ENCODE measurements at regions of chr1 and their contacts with region 1.

Region 1: DNA sequence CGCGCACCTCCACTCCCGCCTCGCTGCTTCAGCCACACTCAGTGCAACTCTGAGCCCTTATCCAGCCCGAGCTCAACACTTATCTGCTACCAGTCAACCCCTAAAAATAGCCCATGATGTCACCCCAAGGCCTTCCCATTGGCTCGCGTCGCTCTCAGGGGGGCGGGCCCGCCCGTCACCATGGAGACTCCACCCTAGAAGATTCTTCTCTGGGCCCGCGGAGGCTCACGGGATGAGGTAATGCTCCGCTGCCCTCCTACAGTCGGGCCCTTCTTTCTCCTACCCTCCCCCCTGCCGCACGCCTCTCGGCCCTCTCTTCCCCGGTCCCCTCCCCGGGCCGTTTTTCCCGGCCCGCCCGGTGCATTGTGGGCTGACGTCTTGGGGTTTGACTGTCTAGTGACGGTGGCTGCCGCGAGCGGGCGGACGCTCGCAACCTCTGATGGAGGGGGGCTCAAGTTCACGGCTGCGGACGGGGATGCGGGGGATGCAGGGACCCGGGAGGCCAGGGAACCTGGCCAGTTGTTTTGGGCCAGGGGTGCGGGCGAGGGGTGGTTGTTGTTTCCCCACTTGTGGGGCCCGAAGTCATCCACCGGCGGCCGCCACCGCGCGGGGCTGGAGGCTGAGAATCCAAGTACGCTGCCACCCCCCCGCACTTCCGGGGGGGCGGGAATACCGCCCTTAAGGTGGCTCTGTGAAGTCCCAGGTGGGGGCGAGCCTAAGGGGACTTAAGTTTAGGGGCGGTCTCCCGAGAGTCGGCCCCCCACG is at the start of gene JUN:
- DNase-seq: peak; percentile 98 to 100 (median 99)
- H3K4me3 ChIP-seq: peak within 1 kb of the TSS; percentile 76 to 96
- H3K4me3 Mint-ChIP-seq: peak within 1 kb of the TSS; percentile 87 to 98 (median 92)
- H3K27ac ChIP-seq: peak within 1 kb of the TSS; percentile 99
- H3K27ac Mint-ChIP-seq: peak within 1 kb of the TSS; percentile 97 to 100 (median 99)
- H3K4me1 ChIP-seq: peaks cover 31% of the 10 kb centered on the region
- H3K4me1 Mint-ChIP-seq: peaks cover 19 to 49% (median 29%) of the 10 kb centered on the region in 4 donors
- H3K27me3 ChIP-seq: no peaks in the 10 kb centered on the region
- H3K27me3 Mint-ChIP-seq: peaks cover 3 to 5% of the 10 kb centered on the region in 2 donors
- total RNA-seq, gene JUN: 19.0 TPM

Region 2: GRCh38 chr1:58739856-58740466 is 44.2 kb before region 1 on chr1:
- CTCF ChIA-PET with region 1: interaction called, 4 read pairs
- POLR2A ChIA-PET with region 1: interaction called, 6 read pairs
- intact Hi-C with region 1: loop called (anchors 5 kb)
- DNase-seq: peak; percentile 39 to 69 (median 58)
- H3K4me3 ChIP-seq: no peak overlapping the region
- H3K4me3 Mint-ChIP-seq: no peak overlapping the region
- H3K27ac ChIP-seq: no peak overlapping the region
- H3K27ac Mint-ChIP-seq: no peak overlapping the region
- H3K4me1 ChIP-seq: no peaks in the 10 kb centered on the region
- H3K4me1 Mint-ChIP-seq: peaks cover 0 to 5% (median 3%) of the 10 kb centered on the region in 4 donors
- H3K27me3 ChIP-seq: no peaks in the 10 kb centered on the region
- H3K27me3 Mint-ChIP-seq: no peaks in the 10 kb centered on the region

Region 3: GRCh38 chr1:58827298-58827697 is 43.1 kb after region 1 on chr1:
- CTCF ChIA-PET with region 1: no interaction called
- POLR2A ChIA-PET with region 1: interaction called, 13 read pairs
- intact Hi-C with region 1: no loop called
- DNase-seq: no peak
- H3K4me3 ChIP-seq: no peak overlapping the region
- H3K4me3 Mint-ChIP-seq: no peak overlapping the region
- H3K27ac ChIP-seq: no peak overlapping the region
- H3K27ac Mint-ChIP-seq: no peak overlapping the region
- H3K4me1 ChIP-seq: no peaks in the 10 kb centered on the region
- H3K4me1 Mint-ChIP-seq: no peaks in the 10 kb centered on the region
- H3K27me3 ChIP-seq: no peaks in the 10 kb centered on the region
- H3K27me3 Mint-ChIP-seq: peaks cover 0 to 2% of the 10 kb centered on the region in 2 donors

Region 4: DNA sequence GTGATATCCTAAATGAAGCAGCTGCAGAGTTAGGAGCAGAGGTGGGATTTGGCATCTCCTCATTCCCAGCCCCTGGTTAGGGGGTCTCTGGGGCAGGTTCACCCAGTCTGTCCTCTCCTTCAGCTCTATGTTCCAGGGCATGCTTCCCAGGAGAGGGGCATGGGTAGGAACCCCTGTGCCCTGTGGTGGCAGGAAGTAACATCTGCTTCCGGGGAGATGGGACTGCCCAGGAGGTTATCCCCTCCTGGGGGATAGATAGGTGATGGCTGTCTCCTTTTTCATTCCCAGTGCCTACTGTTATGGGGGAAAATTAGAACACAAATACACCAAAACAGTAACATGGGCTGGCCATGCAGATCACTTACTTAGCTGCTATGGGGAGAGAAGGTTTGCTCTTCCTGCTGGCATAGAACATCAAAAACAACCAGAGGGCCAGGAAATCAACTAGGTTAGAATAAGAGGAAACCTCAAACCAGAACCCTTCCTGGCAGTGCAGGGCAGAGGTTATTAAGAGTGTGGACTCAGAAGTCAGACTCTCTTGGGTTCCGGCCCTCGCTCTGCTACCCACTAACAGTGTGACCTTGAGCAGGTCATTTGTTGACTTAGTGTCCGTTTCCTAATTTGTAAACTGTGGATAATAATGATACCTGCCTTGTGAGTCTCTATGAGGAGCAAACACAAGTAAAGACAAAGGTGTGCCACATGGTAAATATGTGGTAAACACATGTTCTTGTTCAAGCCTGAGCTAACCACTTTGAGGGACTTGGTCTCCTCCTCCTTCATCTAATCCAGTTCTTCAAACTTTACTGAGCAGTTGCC is 157.5 kb after region 1 on chr1:
- CTCF ChIA-PET with region 1: no interaction called
- POLR2A ChIA-PET with region 1: interaction called, 72 read pairs
- intact Hi-C with region 1: loop called (anchors 1 kb)
- DNase-seq: peak; percentile 62 to 79 (median 76)
- H3K4me3 ChIP-seq: peak overlapping the region in 1 of 2 donors; percentile 21
- H3K4me3 Mint-ChIP-seq: peak overlapping the region; percentile 56 to 86 (median 78)
- H3K27ac ChIP-seq: no peak overlapping the region
- H3K27ac Mint-ChIP-seq: peak overlapping the region; percentile 64 to 88 (median 73)
- H3K4me1 ChIP-seq: peaks cover 59% of the 10 kb centered on the region
- H3K4me1 Mint-ChIP-seq: peaks cover 58 to 69% (median 63%) of the 10 kb centered on the region in 4 donors
- H3K27me3 ChIP-seq: no peaks in the 10 kb centered on the region
- H3K27me3 Mint-ChIP-seq: peaks cover 0 to 5% of the 10 kb centered on the region in 2 donors

Region 5: DNA sequence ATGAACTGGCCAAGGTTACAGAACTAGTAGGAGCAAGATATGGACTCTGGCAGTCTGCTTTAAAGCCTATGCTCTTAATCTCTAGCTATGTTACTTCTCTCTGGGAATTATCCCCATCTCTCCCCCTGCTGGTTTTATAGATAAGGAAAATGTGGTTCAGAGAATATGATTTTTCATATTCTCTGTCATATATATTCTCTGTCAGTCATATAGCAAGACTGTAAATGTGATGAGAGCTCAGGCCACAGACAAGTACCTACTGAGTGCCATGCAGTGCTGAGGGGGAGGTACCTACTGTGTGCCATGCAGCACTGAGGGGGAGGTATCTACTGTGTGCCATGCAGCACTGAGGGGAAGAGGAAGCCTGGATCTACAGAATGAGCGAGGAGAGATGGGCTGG is 292.4 kb after region 1 on chr1:
- CTCF ChIA-PET with region 1: interaction called, 9 read pairs
- POLR2A ChIA-PET with region 1: interaction called, 23 read pairs
- intact Hi-C with region 1: loop called (anchors 1 kb)
- DNase-seq: no peak
- H3K4me3 ChIP-seq: no peak overlapping the region
- H3K4me3 Mint-ChIP-seq: no peak overlapping the region
- H3K27ac ChIP-seq: no peak overlapping the region
- H3K27ac Mint-ChIP-seq: peak overlapping the region in 1 of 7 donors; percentile 43
- H3K4me1 ChIP-seq: peaks cover 12% of the 10 kb centered on the region
- H3K4me1 Mint-ChIP-seq: peaks cover 8 to 16% (median 12%) of the 10 kb centered on the region in 4 donors
- H3K27me3 ChIP-seq: no peaks in the 10 kb centered on the region
- H3K27me3 Mint-ChIP-seq: peaks cover 0 to 5% of the 10 kb centered on the region in 2 donors

Region 6: DNA sequence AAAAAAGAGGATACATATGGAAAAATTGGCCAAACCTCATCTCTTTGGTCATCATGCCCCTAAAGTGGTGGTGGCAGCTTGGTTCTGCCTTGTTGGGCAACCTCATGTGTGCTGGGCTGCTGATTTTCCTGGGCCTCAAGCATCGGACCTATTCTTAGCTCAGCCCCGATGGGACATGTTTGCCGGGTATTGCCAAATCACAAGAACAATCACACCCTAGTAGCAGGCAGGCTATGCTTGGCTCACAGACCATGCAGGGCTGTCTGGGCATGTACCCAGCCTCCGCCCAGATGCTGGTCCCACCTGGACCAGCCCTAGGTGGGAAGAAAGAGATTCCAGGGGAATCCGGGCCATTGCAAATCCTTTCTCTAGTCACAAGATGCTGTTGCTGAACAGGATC is 323.3 kb after region 1 on chr1:
- CTCF ChIA-PET with region 1: no interaction called
- POLR2A ChIA-PET with region 1: no interaction called
- intact Hi-C with region 1: no loop called
- DNase-seq: no peak
- H3K4me3 ChIP-seq: no peak overlapping the region
- H3K4me3 Mint-ChIP-seq: no peak overlapping the region
- H3K27ac ChIP-seq: no peak overlapping the region
- H3K27ac Mint-ChIP-seq: no peak overlapping the region
- H3K4me1 ChIP-seq: no peaks in the 10 kb centered on the region
- H3K4me1 Mint-ChIP-seq: no peaks in the 10 kb centered on the region
- H3K27me3 ChIP-seq: no peaks in the 10 kb centered on the region
- H3K27me3 Mint-ChIP-seq: no peaks in the 10 kb centered on the region

Region 7: GRCh38 chr1:59699227-59699847 is 915.2 kb after region 1 on chr1:
- CTCF ChIA-PET with region 1: interaction called, 16 read pairs
- POLR2A ChIA-PET with region 1: interaction called, 20 read pairs
- intact Hi-C with region 1: loop called (anchors 1 kb)
- DNase-seq: peak in 4 of 5 donors; percentile 42 to 49 (median 48)
- H3K4me3 ChIP-seq: no peak overlapping the region
- H3K4me3 Mint-ChIP-seq: no peak overlapping the region
- H3K27ac ChIP-seq: no peak overlapping the region
- H3K27ac Mint-ChIP-seq: no peak overlapping the region
- H3K4me1 ChIP-seq: peaks cover 22% of the 10 kb centered on the region
- H3K4me1 Mint-ChIP-seq: peaks cover 13 to 19% (median 15%) of the 10 kb centered on the region in 4 donors
- H3K27me3 ChIP-seq: no peaks in the 10 kb centered on the region
- H3K27me3 Mint-ChIP-seq: peaks cover 0 to 2% of the 10 kb centered on the region in 2 donors